CD8-positive, alpha-beta T cell (primary cell): ENCODE measurements at regions of chr3 and their contacts with region 1.

Region 1: GRCh38 chr3:186570096-186570940 is at the start of gene DNAJB11:
- DNase-seq: peak; percentile 94 to 100 (median 97)
- ATAC-seq: peak; percentile 82
- H3K4me3 ChIP-seq: peak within 1 kb of the TSS; percentile 73 to 96
- H3K4me3 Mint-ChIP-seq: peak within 1 kb of the TSS; percentile 94
- H3K27ac ChIP-seq: peak within 1 kb of the TSS; percentile 94 to 97
- H3K27ac Mint-ChIP-seq: peak within 1 kb of the TSS; percentile 98
- H3K4me1 ChIP-seq: peaks cover 30% of the 10 kb centered on the region
- H3K4me1 Mint-ChIP-seq: peaks cover 59% of the 10 kb centered on the region
- H3K27me3 ChIP-seq: no peaks in the 10 kb centered on the region
- H3K27me3 Mint-ChIP-seq: no peaks in the 10 kb centered on the region
- CTCF ChIP-seq: no peak
- total RNA-seq, gene DNAJB11: 70.2 to 73.4 TPM

Region 2: GRCh38 chr3:185282696-185283394 is 1287.5 kb before region 1 on chr3:
- CTCF ChIA-PET with region 1: no interaction called
- POLR2A ChIA-PET with region 1: no interaction called
- intact Hi-C with region 1: loop called in 1 of 2 experiments (anchors 5 kb)
- DNase-seq: peak; percentile 86 to 98 (median 95)
- ATAC-seq: peak; percentile 98
- H3K4me3 ChIP-seq: peak overlapping the region; percentile 75 to 82
- H3K4me3 Mint-ChIP-seq: peak overlapping the region; percentile 86
- H3K27ac ChIP-seq: peak overlapping the region; percentile 58 to 78
- H3K27ac Mint-ChIP-seq: peak overlapping the region; percentile 88
- H3K4me1 ChIP-seq: peaks cover 14% of the 10 kb centered on the region
- H3K4me1 Mint-ChIP-seq: peaks cover 18% of the 10 kb centered on the region
- H3K27me3 ChIP-seq: no peaks in the 10 kb centered on the region
- H3K27me3 Mint-ChIP-seq: peaks cover 24% of the 10 kb centered on the region
- CTCF ChIP-seq: no peak

Region 3: DNA sequence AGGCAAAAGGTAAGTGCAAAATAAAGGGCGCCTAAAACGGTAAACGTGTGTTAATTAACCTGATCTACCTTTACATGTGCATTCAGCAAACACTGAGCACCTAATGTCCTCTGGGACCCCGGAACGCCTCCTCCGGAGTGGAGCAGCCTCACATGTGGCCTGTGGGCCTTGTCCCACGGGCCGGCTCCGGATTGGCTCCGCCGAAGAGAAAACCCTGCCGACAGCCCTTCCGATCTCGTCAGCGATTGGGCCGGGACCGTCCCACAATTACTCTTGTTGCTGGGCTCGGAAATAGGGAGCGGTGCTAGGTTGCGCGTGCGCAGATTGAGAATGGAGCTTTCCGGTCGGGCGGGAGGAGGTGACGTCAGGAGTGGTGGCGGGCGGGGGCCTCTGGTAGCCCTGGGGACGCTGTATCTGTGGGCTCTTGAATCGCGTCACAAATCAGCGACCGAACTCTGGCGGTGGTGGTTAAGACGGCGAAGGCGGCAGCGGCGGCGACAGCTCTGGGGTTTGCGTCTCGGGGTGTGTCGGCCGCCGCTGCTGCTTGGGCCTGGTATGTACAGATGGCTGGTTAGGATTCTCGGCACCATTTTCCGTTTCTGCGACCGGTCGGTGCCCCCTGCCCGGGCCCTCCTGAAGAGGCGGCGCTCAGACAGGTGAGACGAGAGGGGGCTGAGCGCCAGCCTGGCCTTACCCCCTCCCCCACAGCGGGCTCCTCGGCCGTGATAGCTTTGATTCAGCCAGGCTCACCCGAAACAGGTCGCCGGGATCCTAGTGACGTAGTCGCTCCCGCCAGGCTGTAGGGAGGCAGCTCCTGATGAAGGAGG is 984.2 kb before region 1 on chr3 and contains the start of gene SENP2:
- CTCF ChIA-PET with region 1: no interaction called
- POLR2A ChIA-PET with region 1: interaction called, 7 read pairs
- intact Hi-C with region 1: loop called (anchors 1 to 5 kb)
- DNase-seq: peak; percentile 99 to 100 (median 100)
- ATAC-seq: peak; percentile 87
- H3K4me3 ChIP-seq: peak within 1 kb of the TSS; percentile 74 to 100
- H3K4me3 Mint-ChIP-seq: peak within 1 kb of the TSS; percentile 85
- H3K27ac ChIP-seq: peak within 1 kb of the TSS; percentile 92 to 99
- H3K27ac Mint-ChIP-seq: peak within 1 kb of the TSS; percentile 92
- H3K4me1 ChIP-seq: peaks cover 28% of the 10 kb centered on the region
- H3K4me1 Mint-ChIP-seq: peaks cover 36% of the 10 kb centered on the region
- H3K27me3 ChIP-seq: no peaks in the 10 kb centered on the region
- H3K27me3 Mint-ChIP-seq: no peaks in the 10 kb centered on the region
- CTCF ChIP-seq: no peak
- total RNA-seq, gene SENP2: 57.0 to 69.6 TPM

Region 4: DNA sequence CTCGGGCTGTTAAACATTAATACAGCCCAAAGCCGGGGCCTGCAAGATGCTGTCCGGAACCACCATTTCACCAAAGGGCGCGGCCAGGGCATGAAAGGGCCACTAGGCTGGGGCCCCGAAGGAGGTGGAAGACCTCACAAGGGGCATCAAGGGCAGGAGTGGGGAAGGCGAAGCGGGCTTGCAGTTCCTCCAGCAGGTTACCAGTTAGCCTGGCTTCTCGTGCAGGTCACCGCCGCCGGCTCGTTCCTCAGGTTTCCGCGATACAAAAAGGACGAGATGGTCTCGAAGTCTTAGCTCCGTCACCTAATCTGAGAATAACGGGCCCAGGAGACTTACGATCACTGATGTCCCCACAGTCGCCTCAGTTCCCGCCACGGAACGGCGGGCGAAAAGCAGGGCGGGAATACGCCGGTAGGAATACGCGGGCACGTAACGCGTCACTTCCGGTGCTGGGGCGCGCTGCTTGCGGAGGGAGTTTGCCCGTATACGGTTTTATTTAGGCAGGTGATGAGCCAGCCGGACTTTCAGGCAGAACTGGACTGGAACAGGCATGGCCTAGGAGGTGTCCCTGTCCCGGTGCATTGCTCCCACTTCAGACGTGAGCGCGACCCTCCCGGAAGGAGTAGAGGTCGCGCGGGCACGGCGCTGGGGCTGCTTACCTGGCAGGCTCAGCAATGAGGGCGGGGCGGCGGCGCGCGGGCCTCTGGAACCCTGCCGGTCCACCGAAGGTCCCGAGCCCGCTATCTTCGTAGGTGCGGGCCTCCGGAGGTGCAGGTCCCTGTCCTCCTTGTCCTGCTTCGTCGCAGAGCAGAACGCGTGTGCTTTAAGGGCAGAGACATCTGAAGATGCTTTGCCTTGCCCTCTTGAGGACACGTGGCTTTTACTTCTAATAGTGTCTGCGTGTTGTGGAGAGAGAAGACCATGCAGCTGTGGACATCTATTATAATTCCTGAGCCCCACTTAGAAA is 236.1 kb after region 1 on chr3 and contains the start of gene RFC4:
- CTCF ChIA-PET with region 1: no interaction called
- POLR2A ChIA-PET with region 1: no interaction called
- intact Hi-C with region 1: loop called (anchors 5 kb)
- DNase-seq: peak; percentile 60 to 91 (median 85)
- ATAC-seq: peak; percentile 86
- H3K4me3 ChIP-seq: peak within 1 kb of the TSS; percentile 81 to 97
- H3K4me3 Mint-ChIP-seq: peak within 1 kb of the TSS; percentile 97
- H3K27ac ChIP-seq: peak within 1 kb of the TSS; percentile 89 to 92
- H3K27ac Mint-ChIP-seq: peak within 1 kb of the TSS; percentile 97
- H3K4me1 ChIP-seq: peaks cover 23% of the 10 kb centered on the region
- H3K4me1 Mint-ChIP-seq: peaks cover 22% of the 10 kb centered on the region
- H3K27me3 ChIP-seq: no peaks in the 10 kb centered on the region
- H3K27me3 Mint-ChIP-seq: no peaks in the 10 kb centered on the region
- CTCF ChIP-seq: no peak
- total RNA-seq, gene RFC4: 12.7 to 13.9 TPM

Region 5: GRCh38 chr3:186821429-186822367 is 251.4 kb after region 1 on chr3:
- CTCF ChIA-PET with region 1: interaction called, 4 read pairs
- POLR2A ChIA-PET with region 1: no interaction called
- intact Hi-C with region 1: loop called in 1 of 2 experiments (anchors 5 kb)
- DNase-seq: peak in 3 of 9 experiments; percentile 31 to 75 (median 68)
- ATAC-seq: peak; percentile 30
- H3K4me3 ChIP-seq: no peak overlapping the region
- H3K4me3 Mint-ChIP-seq: no peak overlapping the region
- H3K27ac ChIP-seq: no peak overlapping the region
- H3K27ac Mint-ChIP-seq: no peak overlapping the region
- H3K4me1 ChIP-seq: peaks cover 12% of the 10 kb centered on the region
- H3K4me1 Mint-ChIP-seq: peaks cover 14% of the 10 kb centered on the region
- H3K27me3 ChIP-seq: peaks cover 4 to 7% of the 10 kb centered on the region in 2 experiments
- H3K27me3 Mint-ChIP-seq: peaks cover 18% of the 10 kb centered on the region
- CTCF ChIP-seq: peak; percentile 76

Region 6: DNA sequence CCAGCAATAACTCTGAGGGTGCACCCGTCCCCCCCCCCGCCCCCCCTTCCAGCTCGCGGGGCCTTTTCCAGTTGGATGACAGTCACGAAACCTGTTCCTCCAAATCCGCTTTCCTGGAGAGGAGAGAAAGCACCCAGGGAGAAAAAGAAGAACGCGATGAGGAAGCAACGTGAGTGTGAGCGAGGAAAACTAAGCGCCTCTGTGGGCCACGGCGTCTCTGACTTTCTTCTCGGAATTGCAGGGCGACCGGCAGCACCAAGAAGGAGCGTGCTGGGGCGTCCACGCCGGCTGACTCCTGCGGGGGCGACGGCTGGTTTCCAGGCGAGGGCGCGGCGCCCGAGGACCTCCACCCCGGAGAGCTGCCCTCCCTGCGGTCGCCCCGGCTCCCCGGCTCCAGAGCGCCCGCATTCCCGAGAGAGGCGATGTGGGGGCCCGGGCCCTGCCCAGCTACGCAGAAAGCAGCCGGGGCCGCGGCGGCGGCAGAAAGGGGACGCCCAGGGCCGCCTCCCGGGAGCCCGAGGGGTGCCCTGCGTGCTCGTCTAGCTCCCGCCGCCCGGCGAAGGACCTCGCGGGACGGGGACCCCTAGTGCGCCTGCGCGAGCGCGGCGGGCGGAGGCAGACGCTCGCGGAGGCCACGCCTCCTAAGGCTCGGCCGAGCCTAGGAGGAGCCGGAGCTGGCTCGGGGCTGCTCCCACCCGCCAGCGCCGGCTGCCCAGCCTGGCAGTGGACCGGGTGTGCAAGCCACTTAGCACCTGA is 256.8 kb after region 1 on chr3:
- CTCF ChIA-PET with region 1: interaction called, 4 read pairs
- POLR2A ChIA-PET with region 1: interaction called, 3 read pairs
- intact Hi-C with region 1: loop called (anchors 1 to 5 kb)
- DNase-seq: peak; percentile 59 to 95 (median 83)
- ATAC-seq: peak; percentile 93
- H3K4me3 ChIP-seq: peak overlapping the region; percentile 56 to 70
- H3K4me3 Mint-ChIP-seq: peak overlapping the region; percentile 75
- H3K27ac ChIP-seq: no peak overlapping the region
- H3K27ac Mint-ChIP-seq: no peak overlapping the region
- H3K4me1 ChIP-seq: peaks cover 21% of the 10 kb centered on the region
- H3K4me1 Mint-ChIP-seq: peaks cover 24% of the 10 kb centered on the region
- H3K27me3 ChIP-seq: peaks cover 14 to 26% of the 10 kb centered on the region in 2 experiments
- H3K27me3 Mint-ChIP-seq: peaks cover 50% of the 10 kb centered on the region
- CTCF ChIP-seq: no peak

Region 7: DNA sequence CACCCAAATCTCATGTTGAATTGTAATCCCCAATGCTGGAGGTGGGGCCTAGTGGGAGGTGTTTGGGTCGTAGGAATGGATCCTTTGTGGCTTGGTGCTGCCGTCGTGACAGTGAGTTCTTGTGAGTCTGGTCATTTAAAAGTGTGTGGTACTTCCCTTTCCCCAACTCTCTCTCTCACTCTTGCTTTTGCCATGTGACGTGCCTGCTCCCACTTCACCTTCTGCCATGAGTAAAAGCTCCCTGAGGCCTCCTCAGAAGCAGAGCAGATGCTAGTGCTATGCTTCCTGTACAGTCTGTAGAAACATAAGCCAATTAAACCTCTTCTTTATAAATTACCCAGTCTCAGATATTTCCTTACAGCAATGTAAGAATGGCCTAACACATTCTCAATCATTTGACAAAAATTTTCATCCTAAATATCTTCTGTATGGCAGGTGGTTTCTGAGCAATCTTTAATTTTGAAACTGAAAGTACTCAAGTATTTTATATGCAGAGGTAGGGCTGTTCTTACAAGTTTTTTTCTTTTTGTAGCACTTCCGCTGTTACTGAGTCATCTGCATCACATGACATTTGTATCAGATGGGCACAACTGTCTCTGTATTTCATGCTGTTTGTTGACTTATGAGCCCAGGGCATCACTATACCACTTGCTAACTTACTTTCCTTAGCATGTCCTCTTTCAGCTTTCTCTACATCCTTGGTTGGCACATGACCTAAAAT is 560.2 kb after region 1 on chr3:
- CTCF ChIA-PET with region 1: no interaction called
- POLR2A ChIA-PET with region 1: no interaction called
- intact Hi-C with region 1: loop called (anchors 5 to 10 kb)
- DNase-seq: peak in 6 of 9 experiments; percentile 17 to 92 (median 36)
- ATAC-seq: peak; percentile 95
- H3K4me3 ChIP-seq: no peak overlapping the region
- H3K4me3 Mint-ChIP-seq: peak overlapping the region; percentile 51
- H3K27ac ChIP-seq: peak overlapping the region; percentile 38 to 95
- H3K27ac Mint-ChIP-seq: peak overlapping the region; percentile 96
- H3K4me1 ChIP-seq: peaks cover 17% of the 10 kb centered on the region
- H3K4me1 Mint-ChIP-seq: peaks cover 34% of the 10 kb centered on the region
- H3K27me3 ChIP-seq: no peaks in the 10 kb centered on the region
- H3K27me3 Mint-ChIP-seq: no peaks in the 10 kb centered on the region
- CTCF ChIP-seq: no peak